Common myeloid progenitor, CD34-positive (primary cell): ENCODE measurements at regions of chr12 and their contacts with region 1.

Region 1: DNA sequence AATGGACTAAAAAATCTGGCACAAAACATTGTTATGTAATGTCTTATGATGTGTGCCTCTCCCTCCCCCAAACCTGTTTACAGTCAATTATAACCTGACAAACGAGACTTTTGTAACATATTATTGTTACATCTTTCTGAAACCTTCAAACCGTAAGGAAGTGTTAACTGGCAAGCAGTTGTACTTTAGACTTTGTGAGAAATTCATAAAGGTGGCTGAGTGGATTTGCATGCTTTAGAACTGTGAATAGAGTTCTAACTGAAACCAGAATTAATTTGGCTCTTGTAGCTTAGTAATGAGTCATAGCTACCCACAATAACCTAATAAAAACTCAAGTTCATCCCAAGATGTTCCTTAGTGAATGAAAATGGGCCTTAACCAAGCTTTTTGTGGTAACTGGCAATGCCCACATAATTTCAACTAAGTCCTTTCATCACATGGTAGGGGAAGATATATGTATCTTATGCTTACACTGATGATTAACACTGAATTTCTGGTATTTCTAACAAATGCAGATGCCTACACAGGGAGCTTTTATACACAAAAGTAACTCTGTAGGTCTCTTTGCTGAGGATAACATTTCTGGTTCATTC is 29.7 kb downstream of the RAD9B start:
- DNase-seq: no peak
- H3K4me3 ChIP-seq: no peak overlapping the region
- H3K27ac ChIP-seq: no peak overlapping the region
- H3K4me1 ChIP-seq: no peaks in the 10 kb centered on the region
- H3K27me3 ChIP-seq: no peaks in the 10 kb centered on the region

Region 2: GRCh38 chr12:110513842-110514241 is 18.0 kb before region 1 on chr12:
- CTCF ChIA-PET with region 1: interaction called, 10 read pairs
- POLR2A ChIA-PET with region 1: no interaction called
- DNase-seq: no peak
- H3K4me3 ChIP-seq: no peak overlapping the region
- H3K27ac ChIP-seq: no peak overlapping the region
- H3K4me1 ChIP-seq: no peaks in the 10 kb centered on the region
- H3K27me3 ChIP-seq: no peaks in the 10 kb centered on the region

Region 3: DNA sequence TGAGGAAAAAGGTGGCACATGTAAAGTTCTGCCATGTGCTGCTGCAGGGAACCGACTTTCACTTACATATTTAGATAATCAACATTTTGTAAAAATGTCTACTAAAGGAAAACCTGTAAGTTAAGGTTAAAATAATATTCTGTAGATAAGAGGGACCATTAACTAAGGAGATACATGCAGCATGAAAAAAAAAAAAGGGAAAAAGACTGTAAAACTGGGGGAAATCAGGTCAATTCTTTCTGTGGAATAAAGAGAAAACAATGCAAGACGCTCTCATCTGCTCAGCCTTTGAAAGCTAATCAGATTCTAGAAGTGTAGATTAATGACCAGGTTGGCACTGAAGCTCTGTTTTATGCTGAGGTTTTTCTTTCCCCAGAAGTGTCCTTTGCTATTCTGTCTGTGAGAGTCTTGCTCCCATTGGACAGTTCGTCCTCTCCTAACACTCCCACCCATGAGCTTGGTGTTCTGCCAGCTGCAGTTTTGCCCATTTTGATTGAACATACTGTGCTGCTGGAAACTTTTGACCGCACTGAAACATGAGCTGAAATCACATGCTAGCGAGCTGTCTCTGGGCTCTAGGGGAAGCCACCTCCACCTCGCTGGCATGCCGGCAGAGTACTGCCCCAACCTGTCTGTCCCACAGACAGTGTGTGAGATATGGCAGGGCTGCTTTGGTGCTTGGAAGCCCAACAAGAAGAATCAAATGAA is 11.6 kb after region 1 on chr12:
- CTCF ChIA-PET with region 1: interaction called, 11 read pairs
- POLR2A ChIA-PET with region 1: interaction called, 3 read pairs
- DNase-seq: no peak
- H3K4me3 ChIP-seq: no peak overlapping the region
- H3K27ac ChIP-seq: peak overlapping the region in 1 of 2 experiments; percentile 29
- H3K4me1 ChIP-seq: no peaks in the 10 kb centered on the region
- H3K27me3 ChIP-seq: no peaks in the 10 kb centered on the region

Region 4: GRCh38 chr12:110577717-110578521 is 46.1 kb after region 1 on chr12:
- CTCF ChIA-PET with region 1: no interaction called
- POLR2A ChIA-PET with region 1: no interaction called
- DNase-seq: peak in 2 of 3 donors; percentile 62 to 75
- H3K4me3 ChIP-seq: peak overlapping the region in 1 of 7 experiments; percentile 25
- H3K27ac ChIP-seq: peak overlapping the region in 1 of 2 experiments; percentile 69
- H3K4me1 ChIP-seq: peaks cover 15 to 58% (median 42%) of the 10 kb centered on the region in 4 experiments
- H3K27me3 ChIP-seq: no peaks in the 10 kb centered on the region

Region 5: DNA sequence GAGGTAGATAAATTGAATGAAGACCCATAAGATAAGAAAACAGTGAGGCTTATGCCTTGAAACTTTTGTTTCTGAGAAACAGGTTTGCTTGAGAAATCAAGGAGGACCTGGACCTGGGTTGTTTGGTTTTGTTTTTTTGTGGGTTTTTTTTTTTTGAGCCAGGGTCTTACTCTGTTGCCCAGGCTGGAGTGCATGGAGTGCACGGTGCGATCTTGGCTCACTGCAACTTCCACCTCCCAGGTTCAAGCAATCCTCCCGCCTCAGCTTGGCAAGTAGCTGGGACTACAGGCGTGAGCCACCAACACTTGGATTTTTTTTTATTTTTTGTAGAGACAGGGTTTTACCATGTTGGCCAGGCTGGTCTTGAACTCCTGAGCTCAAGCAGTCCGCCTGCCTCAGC is 60.2 kb after region 1 on chr12:
- CTCF ChIA-PET with region 1: no interaction called
- POLR2A ChIA-PET with region 1: no interaction called
- DNase-seq: no peak
- H3K4me3 ChIP-seq: no peak overlapping the region
- H3K27ac ChIP-seq: peak overlapping the region in 1 of 2 experiments; percentile 93
- H3K4me1 ChIP-seq: peaks cover 11 to 30% (median 25%) of the 10 kb centered on the region in 4 experiments
- H3K27me3 ChIP-seq: no peaks in the 10 kb centered on the region

Region 6: DNA sequence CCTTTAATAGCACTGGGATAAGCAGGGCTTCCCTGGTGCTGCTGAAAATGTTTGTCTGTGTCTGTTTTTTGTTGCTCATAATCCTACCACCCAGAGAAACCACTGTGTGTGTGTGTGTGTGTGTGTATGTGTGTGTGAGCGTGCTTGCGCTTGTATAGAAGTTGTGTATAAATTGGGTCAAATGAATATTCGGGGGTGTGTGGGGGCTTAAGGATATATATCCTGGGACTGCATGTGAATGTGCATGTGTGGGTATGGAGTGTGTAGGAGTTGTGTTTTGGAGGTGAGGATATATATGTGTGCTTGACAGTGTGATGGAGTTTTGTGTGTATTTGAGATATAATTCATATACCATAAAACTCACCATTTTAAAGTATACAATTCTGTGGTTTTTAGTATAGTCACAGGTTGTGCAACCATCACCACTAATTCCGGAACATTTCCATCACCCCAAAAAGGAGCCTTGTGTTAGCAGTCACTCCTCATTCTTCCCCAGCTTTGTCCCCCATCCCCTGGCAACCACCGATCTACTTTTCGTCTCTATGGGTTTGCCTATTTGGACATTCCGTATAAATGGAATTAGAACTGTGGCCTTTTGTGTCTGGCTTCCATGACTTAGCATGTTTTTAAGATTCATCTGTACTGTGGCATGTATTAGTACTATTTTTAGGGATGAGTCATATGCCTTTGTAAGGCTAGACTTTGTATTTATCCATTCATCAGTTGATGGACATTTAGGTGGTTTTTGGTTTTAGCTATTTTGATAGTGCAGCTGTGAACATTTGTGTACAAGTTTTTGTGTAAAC is 107.7 kb after region 1 on chr12:
- CTCF ChIA-PET with region 1: no interaction called
- POLR2A ChIA-PET with region 1: no interaction called
- DNase-seq: peak in 2 of 3 donors; percentile 56 to 71
- H3K4me3 ChIP-seq: no peak overlapping the region
- H3K27ac ChIP-seq: no peak overlapping the region
- H3K4me1 ChIP-seq: peaks cover 4 to 65% (median 6%) of the 10 kb centered on the region in 4 experiments
- H3K27me3 ChIP-seq: no peaks in the 10 kb centered on the region

Region 7: DNA sequence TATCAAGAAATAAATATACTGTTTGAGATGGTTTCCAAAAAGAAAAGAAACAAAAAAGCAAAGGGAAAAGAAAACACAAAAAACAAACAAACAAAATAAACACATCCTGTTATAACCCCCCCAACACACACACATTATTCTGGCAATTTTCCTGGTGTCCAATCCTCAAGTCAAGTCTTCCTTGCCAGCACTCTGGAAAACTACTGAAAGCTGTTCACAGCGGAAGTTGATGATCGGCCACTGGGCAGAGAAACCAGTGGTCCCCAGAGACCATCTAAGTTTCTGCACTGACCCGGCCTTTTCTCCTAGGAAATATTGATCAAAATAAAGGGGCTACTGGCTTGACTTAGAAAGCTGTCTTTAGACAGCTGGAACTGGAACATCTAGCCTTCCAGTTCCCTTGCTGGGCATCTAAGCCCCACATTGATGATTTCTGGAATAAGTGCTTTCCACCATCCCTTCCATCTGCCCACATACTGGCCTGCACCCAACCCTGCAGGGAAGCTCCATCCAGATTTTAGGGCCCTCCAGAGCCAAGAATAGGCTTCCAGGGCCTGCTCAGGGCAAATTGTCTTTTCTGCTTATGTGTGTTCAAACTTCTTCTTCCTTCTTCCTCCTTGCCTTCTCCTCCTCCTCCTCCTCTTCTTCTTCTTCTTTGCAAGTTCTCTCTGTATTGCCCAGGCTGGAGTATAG is 222.4 kb after region 1 on chr12:
- CTCF ChIA-PET with region 1: no interaction called
- POLR2A ChIA-PET with region 1: no interaction called
- DNase-seq: no peak
- H3K4me3 ChIP-seq: no peak overlapping the region
- H3K27ac ChIP-seq: no peak overlapping the region
- H3K4me1 ChIP-seq: no peaks in the 10 kb centered on the region
- H3K27me3 ChIP-seq: no peaks in the 10 kb centered on the region